ENCODE measurements at regions of chr3 and their contacts with region 1.

Region 1: DNA sequence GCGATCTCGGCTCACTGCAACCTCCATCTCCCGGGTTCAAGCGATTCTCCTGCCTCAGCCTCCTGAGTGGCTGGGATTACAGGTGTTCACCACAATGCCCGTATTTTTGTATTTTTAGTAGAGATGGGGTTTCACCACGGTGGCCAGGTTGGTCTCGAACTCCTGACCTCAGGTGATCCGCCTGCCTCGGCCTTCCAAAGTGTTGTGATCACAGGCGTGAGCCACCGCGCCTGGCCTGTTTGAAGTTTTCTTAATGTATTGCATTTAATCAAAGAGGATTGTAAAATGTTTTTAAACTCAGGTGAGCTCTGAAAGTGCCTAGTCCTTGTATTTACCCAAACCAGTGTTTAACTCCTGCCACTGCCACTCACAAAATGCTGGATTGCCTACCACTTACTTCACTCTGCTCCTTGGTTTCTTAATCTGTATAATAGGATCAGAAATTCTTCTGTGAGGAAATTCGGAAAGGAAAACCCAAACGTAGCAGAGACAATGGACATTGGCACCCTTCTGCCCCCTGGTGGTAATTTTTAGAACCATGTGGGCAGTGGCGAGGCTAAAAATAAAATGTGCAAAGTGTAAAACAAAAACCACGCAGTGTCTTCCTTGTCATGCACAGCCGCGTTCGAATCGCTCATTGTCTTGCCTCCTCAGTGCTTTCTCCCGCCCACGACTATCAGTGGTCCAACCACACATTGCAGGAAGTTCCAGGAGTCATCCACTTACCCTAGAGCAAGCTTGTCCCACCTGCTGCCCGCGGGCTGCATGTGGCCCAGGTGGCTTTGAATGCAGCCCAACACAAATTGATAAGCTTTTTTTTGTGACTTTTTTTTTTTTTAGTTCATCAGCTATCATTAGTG is 27.3 kb downstream of the CEP19 start:
- DNase-seq: peak; percentile 83
- H3K4me3 ChIP-seq: no peak overlapping the region
- H3K27ac ChIP-seq: no peak overlapping the region
- H3K4me1 ChIP-seq: peaks cover 40% of the 10 kb centered on the region
- H3K27me3 ChIP-seq: no peaks in the 10 kb centered on the region
- CTCF ChIP-seq: peak; percentile 90

Region 2: DNA sequence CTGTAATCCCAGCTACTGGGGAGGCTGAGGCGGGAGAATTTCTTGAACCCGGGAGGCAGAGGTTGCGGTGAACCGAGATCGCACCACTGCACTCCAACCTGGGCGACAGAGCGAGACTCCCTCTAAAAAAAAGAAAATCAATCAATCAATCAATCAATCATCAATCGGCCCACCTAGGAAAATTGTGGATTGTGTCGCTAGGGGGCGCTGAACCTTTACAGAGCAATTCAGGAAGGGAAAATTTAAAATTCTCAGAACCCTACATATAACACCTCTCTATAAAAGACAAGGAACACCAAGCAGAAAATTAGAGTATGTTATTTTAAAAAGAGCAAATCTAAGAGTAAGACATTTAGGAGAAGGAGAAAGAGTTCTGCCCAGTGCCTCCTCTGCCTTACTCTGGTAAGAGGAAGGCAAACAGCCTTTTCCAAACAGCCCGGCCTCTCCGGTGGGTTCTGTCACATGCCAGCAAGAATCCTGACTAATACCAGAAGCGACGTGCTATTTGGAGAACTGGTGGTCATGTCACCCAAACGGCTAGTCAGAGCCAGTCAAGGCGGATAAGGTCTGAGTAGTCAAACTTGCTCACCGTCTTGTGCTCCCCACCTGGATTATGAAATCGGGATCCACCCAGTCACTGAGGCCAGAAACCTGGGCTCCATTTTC is 147.3 kb before region 1 on chr3:
- CTCF ChIA-PET with region 1: no interaction called
- POLR2A ChIA-PET with region 1: no interaction called
- intact Hi-C with region 1: loop called (anchors 5 kb)
- DNase-seq: peak; percentile 51
- H3K4me3 ChIP-seq: no peak overlapping the region
- H3K27ac ChIP-seq: no peak overlapping the region
- H3K4me1 ChIP-seq: no peaks in the 10 kb centered on the region
- H3K27me3 ChIP-seq: no peaks in the 10 kb centered on the region
- CTCF ChIP-seq: peak; percentile 85

Region 3: GRCh38 chr3:196813903-196814302 is 129.1 kb after region 1 on chr3:
- CTCF ChIA-PET with region 1: no interaction called
- POLR2A ChIA-PET with region 1: no interaction called
- intact Hi-C with region 1: no loop called
- DNase-seq: no peak
- H3K4me3 ChIP-seq: no peak overlapping the region
- H3K27ac ChIP-seq: no peak overlapping the region
- H3K4me1 ChIP-seq: no peaks in the 10 kb centered on the region
- H3K27me3 ChIP-seq: no peaks in the 10 kb centered on the region
- CTCF ChIP-seq: no peak

Measured in A673 (cell line).